H1 (cell line): ENCODE measurements at regions of chr1 and their contacts with region 1.

Region 1: GRCh38 chr1:7667625-7668218 is 103.4 kb upstream of the VAMP3 start:
- DNase-seq: peak; percentile 53 to 99
- H3K4me3 ChIP-seq: no peak overlapping the region
- H3K27ac ChIP-seq: no peak overlapping the region
- H3K4me1 ChIP-seq: peaks cover 0 to 23% (median 12%) of the 10 kb centered on the region in 4 experiments; a peak in 6 of 7 replicates
- H3K27me3 ChIP-seq: no peaks in the 10 kb centered on the region; a peak in 1 of 7 replicates
- CTCF ChIP-seq: peak; percentile 99 to 100 (median 100)
- EP300 ChIP-seq: no peak
- POLR2A ChIP-seq: no peak
- RAD21 ChIP-seq: peak; percentile 97 to 99

Region 2: DNA sequence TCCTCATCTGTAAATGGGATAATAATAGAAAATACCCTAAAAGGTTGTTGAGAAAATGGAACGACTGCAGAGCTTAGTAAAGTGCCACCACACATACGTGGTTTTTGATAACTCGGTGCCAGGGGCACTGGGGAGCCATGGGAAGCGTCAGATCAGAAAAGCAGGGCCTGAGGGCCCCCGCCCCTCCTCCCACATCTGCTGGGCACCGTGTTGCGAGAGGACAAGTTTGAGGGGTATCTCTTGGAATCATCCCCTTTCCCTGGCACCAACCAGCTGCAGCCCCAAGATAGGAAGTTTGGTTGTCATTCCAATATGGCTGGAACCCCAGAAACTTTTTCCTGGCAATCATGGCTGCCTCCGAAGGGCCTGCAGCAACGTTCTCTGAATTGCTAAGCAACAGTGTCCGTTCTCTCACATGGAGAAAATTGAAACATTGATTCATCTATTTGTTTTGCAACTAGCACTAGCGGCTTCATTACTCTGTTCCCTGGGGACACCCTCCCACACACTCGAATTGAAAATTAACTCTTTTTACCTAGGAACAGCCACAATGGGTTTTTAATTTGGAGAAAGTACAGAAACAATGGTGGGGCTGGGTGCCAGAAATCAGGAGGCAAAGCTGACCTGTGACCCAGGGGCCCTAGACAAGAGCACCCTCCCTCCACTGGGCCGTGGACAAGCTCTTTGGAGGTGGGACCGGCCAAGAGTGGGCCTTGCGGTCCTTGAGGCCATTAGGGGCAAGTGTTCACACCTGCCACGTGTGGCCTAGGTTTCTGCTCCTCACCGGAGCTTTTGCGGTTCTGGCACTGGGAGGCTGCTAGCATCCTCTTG is 86.6 kb before region 1 on chr1:
- CTCF ChIA-PET with region 1: no interaction called
- POLR2A ChIA-PET with region 1: no interaction called
- DNase-seq: no peak
- H3K4me3 ChIP-seq: no peak overlapping the region
- H3K27ac ChIP-seq: no peak overlapping the region
- H3K4me1 ChIP-seq: peaks cover 0 to 8% (median 0%) of the 10 kb centered on the region in 4 experiments; a peak in 1 of 7 replicates
- H3K27me3 ChIP-seq: no peaks in the 10 kb centered on the region; a peak in 1 of 7 replicates
- CTCF ChIP-seq: no peak
- EP300 ChIP-seq: no peak
- POLR2A ChIP-seq: no peak
- RAD21 ChIP-seq: no peak

Region 3: GRCh38 chr1:7616076-7616832 is 51.5 kb before region 1 on chr1:
- CTCF ChIA-PET with region 1: no interaction called
- POLR2A ChIA-PET with region 1: no interaction called
- DNase-seq: peak in 1 of 2 experiments; percentile 90
- H3K4me3 ChIP-seq: no peak overlapping the region
- H3K27ac ChIP-seq: no peak overlapping the region
- H3K4me1 ChIP-seq: no peaks in the 10 kb centered on the region; a peak in 1 of 7 replicates
- H3K27me3 ChIP-seq: no peaks in the 10 kb centered on the region
- CTCF ChIP-seq: no peak
- EP300 ChIP-seq: no peak
- POLR2A ChIP-seq: no peak
- RAD21 ChIP-seq: no peak

Region 4: DNA sequence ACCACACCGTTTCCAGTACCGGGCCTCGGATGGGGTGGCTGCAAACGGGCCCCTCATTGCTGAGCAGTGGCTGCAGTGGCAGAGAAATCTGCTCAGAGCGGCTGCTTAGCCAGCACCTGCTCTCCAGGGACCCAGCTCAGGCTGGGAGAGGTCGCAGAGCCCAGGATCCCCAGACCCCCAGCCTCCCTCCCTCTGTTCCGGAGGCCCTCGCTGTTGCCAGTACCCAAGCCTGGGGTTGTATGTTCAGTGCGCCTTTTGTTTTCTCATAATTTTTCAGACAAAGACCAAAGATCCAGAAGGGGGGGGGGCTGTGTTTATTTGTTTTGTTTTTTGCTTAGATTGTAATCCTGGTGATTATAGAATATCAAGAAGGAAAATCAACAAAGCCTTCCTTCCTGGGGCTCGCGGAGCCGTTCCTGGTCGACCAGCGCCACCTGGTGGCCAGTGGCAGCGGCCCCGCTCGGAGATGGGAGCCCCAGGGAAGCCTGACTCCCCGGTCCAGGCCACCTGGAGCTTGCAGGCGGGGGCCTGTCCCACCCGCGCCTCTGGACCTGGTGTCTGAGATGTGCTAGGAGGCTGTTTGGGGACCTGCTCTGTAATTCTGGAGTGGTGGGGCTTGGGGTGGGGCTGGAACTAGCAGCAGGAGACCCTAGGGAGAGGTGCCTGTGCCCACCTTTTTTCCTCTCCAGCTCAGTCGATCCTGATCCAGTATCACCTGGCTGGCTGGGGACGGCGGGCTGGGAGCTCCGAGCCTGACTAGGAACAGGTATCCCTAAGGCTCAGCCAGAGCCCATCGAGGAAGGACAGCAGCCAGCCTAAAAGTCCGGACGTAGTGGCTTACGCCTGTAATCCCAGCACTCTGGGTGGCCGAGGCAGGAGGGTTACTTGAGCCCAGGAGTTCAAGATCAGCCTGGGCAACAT is 20.5 kb before region 1 on chr1:
- CTCF ChIA-PET with region 1: interaction called, 60 read pairs
- POLR2A ChIA-PET with region 1: no interaction called
- DNase-seq: peak in 1 of 2 experiments; percentile 92
- H3K4me3 ChIP-seq: no peak overlapping the region
- H3K27ac ChIP-seq: no peak overlapping the region
- H3K4me1 ChIP-seq: peaks cover 0 to 4% (median 0%) of the 10 kb centered on the region in 4 experiments; a peak in 2 of 7 replicates
- H3K27me3 ChIP-seq: no peaks in the 10 kb centered on the region
- CTCF ChIP-seq: peak; percentile 76 to 90 (median 81)
- EP300 ChIP-seq: no peak
- POLR2A ChIP-seq: no peak
- RAD21 ChIP-seq: peak; percentile 90 to 91

Region 5: GRCh38 chr1:7690496-7691182 is 22.9 kb after region 1 on chr1:
- CTCF ChIA-PET with region 1: interaction called, 44 read pairs
- POLR2A ChIA-PET with region 1: interaction called, 4 read pairs
- DNase-seq: no peak
- H3K4me3 ChIP-seq: no peak overlapping the region
- H3K27ac ChIP-seq: no peak overlapping the region
- H3K4me1 ChIP-seq: peaks cover 0 to 9% (median 0%) of the 10 kb centered on the region in 4 experiments; a peak in 1 of 7 replicates
- H3K27me3 ChIP-seq: no peaks in the 10 kb centered on the region; a peak in 1 of 7 replicates
- CTCF ChIP-seq: no peak
- EP300 ChIP-seq: no peak
- POLR2A ChIP-seq: no peak
- RAD21 ChIP-seq: no peak

Region 6: DNA sequence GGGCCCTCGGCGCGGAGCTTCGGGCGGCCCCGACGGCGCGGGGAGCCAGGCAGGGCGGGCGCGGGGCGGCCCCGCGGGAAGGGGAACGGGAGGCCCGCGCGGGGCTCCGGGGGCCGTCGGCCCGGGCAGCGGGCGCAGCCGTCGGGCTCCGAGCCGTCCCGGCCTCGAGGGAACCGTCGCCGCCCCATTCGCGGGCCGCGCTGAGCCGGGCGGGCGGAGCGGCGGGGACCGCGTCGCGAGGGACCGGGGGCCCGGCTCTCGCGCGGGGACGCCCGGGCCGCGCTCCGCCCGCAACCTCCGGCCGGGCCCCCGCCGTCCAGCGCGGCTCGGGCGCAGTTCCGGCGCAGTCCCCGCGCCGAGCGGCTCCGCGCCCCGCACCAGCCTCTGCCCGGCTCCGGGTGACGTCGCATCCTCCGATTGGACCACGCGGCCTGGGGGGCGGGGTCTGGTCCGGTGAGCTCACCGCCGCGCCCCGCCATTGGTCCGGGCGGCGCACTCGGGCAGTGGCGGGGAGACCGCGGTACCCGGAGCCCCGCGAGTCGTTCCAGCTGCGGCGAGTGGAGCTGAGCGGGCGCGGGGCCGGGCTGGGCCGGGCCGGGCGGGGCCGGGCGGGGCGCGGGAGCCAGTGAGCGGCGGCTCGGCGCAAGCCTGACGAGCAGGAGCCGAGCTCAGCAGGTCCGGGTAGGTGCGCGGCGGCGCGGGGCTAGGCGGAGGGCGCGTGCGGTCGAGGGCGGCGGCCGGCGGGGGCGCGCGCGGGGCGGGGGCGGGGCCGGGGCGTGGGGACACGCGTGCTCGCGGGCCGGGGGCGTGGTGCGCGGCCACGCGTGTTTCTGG is 36.7 kb after region 1 on chr1:
- CTCF ChIA-PET with region 1: interaction called, 44 read pairs
- POLR2A ChIA-PET with region 1: interaction called, 6 read pairs
- DNase-seq: peak; percentile 75 to 97
- H3K4me3 ChIP-seq: peak overlapping the region in 3 of 4 experiments; percentile 16 to 62 (median 56); a peak in 5 of 8 replicates
- H3K27ac ChIP-seq: no peak overlapping the region
- H3K4me1 ChIP-seq: peaks cover 2 to 16% (median 10%) of the 10 kb centered on the region in 4 experiments; a peak in 6 of 7 replicates
- H3K27me3 ChIP-seq: peaks cover 0 to 21% (median 15%) of the 10 kb centered on the region in 4 experiments; a peak in 5 of 7 replicates
- CTCF ChIP-seq: no peak
- EP300 ChIP-seq: no peak
- POLR2A ChIP-seq: no peak
- RAD21 ChIP-seq: no peak

Region 7: GRCh38 chr1:7743346-7743745 is 75.6 kb after region 1 on chr1:
- CTCF ChIA-PET with region 1: interaction called, 554 read pairs
- POLR2A ChIA-PET with region 1: no interaction called
- DNase-seq: peak in 1 of 2 experiments; percentile 14
- H3K4me3 ChIP-seq: no peak overlapping the region
- H3K27ac ChIP-seq: no peak overlapping the region
- H3K4me1 ChIP-seq: no peaks in the 10 kb centered on the region
- H3K27me3 ChIP-seq: no peaks in the 10 kb centered on the region
- CTCF ChIP-seq: no peak
- EP300 ChIP-seq: no peak
- POLR2A ChIP-seq: no peak
- RAD21 ChIP-seq: no peak

Region 8: DNA sequence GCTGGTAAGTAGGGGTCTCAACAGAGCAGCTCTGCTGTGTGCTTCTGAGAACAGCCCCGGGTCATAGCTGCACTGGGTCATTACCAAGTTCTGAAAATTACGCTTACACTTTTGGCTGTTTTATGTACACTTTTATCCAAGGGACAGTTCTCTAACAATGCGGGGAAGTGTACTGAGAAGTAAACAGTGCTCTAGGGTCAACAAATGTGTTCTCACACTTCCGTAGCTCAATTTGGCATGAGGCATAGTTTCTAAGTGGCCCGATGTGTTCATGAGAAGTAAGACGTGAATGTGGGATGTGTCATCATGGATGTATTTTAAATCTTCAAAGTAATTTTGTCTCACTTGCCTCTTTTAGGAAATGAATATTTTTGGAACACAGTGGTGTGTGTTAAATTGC is 92.5 kb after region 1 on chr1:
- CTCF ChIA-PET with region 1: interaction called, 554 read pairs
- POLR2A ChIA-PET with region 1: interaction called, 36 read pairs
- DNase-seq: no peak
- H3K4me3 ChIP-seq: no peak overlapping the region
- H3K27ac ChIP-seq: no peak overlapping the region
- H3K4me1 ChIP-seq: no peaks in the 10 kb centered on the region
- H3K27me3 ChIP-seq: no peaks in the 10 kb centered on the region
- CTCF ChIP-seq: no peak
- EP300 ChIP-seq: no peak
- POLR2A ChIP-seq: no peak
- RAD21 ChIP-seq: no peak